Activated CD4-positive, alpha-beta T cell treated with anti-CD3 and anti-CD28 coated beads, Interleukin-2, amount 10 ng/mL, durations not matched to agents 7 days and 5 days (primary cell): ENCODE measurements at regions of chr14 and their contacts with region 1.

Region 1: DNA sequence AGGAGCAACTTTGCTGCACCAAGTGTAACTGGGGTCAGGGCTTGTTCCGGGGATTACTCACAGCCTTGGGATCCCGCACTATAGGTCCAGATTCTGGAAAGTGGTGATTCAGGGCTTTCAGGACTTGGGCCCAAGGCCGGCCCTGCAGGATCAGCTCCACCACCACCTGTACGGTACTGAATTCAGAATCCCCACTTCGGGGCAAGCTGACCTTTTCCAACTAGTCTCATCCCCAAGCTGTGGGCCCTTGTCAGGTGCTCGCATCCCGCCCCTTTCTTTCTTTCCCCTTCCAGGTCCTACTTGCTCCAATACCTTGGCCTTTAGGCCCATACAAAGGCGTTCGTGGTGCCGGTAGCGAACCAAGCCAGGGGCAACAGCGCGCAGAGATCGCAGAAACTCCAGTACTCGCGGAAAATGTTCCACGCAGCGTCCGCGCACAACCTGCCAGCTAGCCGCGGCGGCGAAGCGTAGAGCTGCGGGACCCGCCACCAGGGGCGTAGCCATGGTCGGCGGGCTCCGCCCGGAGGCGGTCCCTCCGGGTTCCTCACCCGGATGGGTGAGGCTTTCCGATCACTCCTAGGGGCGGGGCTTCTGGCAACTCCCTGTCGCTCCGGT is 487 bp downstream of the TINF2 start:
- DNase-seq: peak; percentile 96
- H3K4me3 Mint-ChIP-seq: peak overlapping the region; percentile 95
- H3K27ac Mint-ChIP-seq: peak overlapping the region; percentile 100
- H3K4me1 Mint-ChIP-seq: peaks cover 58% of the 10 kb centered on the region
- H3K27me3 Mint-ChIP-seq: no peaks in the 10 kb centered on the region

Region 2: GRCh38 chr14:24215495-24216344 is 26.2 kb before region 1 on chr14 and contains the start of gene MDP1:
- CTCF ChIA-PET with region 1: interaction called, 20 read pairs
- POLR2A ChIA-PET with region 1: interaction called, 4 read pairs
- DNase-seq: peak; percentile 92
- H3K4me3 Mint-ChIP-seq: peak within 1 kb of the TSS; percentile 92
- H3K27ac Mint-ChIP-seq: peak within 1 kb of the TSS; percentile 95
- H3K4me1 Mint-ChIP-seq: peaks cover 50% of the 10 kb centered on the region
- H3K27me3 Mint-ChIP-seq: no peaks in the 10 kb centered on the region
- total RNA-seq, gene MDP1: 10.1 to 10.7 TPM

Region 3: DNA sequence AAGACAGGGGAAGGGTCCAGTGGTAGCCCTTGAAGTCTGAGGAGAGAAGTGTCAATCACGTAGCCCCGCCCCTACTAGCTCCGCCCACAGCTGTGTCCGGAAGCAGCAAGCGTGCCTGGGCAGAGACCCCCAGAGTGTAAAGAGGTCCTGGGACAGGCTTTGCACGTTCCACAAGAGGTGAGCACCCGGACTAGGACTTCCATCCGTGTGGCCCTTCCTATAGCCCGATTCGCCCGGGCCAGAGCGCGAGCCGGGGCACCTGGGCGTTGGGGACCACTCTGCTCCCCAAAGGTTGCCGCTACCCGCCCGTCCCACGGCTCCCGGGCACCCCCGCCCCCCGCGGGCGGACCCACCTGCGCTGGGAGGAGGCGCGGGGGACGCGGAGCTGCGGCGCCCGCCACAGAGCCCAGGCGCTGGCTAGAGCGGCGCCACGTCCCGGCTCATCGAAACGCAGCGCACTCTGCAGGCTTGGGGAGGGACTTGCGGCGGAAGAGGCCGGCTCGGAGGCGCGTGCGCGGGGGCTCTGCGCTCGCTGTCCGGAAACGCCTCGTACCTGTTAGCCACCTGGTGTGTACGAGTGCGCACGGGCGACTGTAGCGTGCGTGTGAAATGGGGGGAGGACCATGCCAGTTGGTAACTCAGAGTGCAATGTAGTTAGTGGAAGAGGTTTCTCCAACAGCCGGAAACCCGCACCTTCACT is 29.3 kb after region 1 on chr14 and contains the start of gene RABGGTA:
- CTCF ChIA-PET with region 1: interaction called, 44 read pairs
- POLR2A ChIA-PET with region 1: interaction called, 11 read pairs
- DNase-seq: peak; percentile 91
- H3K4me3 Mint-ChIP-seq: peak within 1 kb of the TSS; percentile 87
- H3K27ac Mint-ChIP-seq: peak within 1 kb of the TSS; percentile 96
- H3K4me1 Mint-ChIP-seq: peaks cover 52% of the 10 kb centered on the region
- H3K27me3 Mint-ChIP-seq: no peaks in the 10 kb centered on the region
- total RNA-seq, gene RABGGTA: 54.8 to 55.0 TPM

Region 4: DNA sequence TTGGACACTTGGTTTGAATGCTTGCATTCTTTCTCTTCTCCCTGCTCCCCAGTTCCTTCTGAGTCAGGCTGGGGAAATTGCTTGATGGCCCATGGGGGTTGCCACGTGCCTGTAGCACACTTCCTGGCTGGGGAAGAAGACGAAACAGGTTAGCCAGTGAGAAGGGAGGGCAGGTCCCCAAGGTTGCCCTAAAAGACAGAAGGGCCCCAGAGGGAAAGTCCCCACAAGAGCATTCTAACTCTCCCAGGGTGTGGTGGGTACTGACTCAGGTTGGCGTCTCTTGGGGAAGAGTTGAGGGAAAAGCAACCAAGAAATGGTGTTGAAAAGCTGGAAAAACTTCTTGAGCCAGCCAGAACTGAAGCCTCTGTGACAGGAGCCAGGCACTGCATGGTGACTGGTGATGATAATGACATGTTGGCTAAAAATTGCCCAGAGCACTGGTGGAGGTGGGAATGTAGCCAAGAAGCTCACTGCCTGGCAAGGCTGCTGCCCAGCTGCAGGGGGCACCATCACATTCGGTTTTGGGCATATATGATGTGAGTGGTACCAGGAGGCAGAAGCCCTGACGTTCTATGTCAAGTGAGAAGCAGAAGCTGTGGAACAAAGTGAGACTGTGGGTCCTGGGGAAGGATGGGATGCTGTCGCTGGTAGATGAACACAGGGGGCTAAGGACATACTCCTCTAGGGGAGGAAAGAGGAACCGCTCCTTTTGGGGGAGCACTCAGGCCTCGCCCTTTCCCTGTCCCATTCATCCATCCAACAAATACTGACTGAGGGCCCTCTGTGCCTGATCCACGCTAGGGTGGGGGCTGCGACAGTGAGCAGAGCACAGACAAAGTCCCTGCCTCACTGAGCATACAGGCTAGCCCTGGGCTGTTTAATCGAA is 37.6 kb after region 1 on chr14:
- CTCF ChIA-PET with region 1: interaction called, 17 read pairs
- POLR2A ChIA-PET with region 1: no interaction called
- DNase-seq: peak; percentile 47
- H3K4me3 Mint-ChIP-seq: no peak overlapping the region
- H3K27ac Mint-ChIP-seq: peak overlapping the region; percentile 75
- H3K4me1 Mint-ChIP-seq: peaks cover 43% of the 10 kb centered on the region
- H3K27me3 Mint-ChIP-seq: peaks cover 3% of the 10 kb centered on the region

Region 5: GRCh38 chr14:24289649-24290249 is 47.8 kb after region 1 on chr14:
- CTCF ChIA-PET with region 1: interaction called, 29 read pairs
- POLR2A ChIA-PET with region 1: interaction called, 3 read pairs
- DNase-seq: peak; percentile 50
- H3K4me3 Mint-ChIP-seq: no peak overlapping the region
- H3K27ac Mint-ChIP-seq: no peak overlapping the region
- H3K4me1 Mint-ChIP-seq: peaks cover 27% of the 10 kb centered on the region
- H3K27me3 Mint-ChIP-seq: peaks cover 2% of the 10 kb centered on the region

Region 6: GRCh38 chr14:24299255-24300195 is 57.6 kb after region 1 on chr14 and contains the starts of genes DHRS1 and NOP9:
- CTCF ChIA-PET with region 1: interaction called, 75 read pairs
- POLR2A ChIA-PET with region 1: interaction called, 10 read pairs
- DNase-seq: peak; percentile 92
- H3K4me3 Mint-ChIP-seq: peak within 1 kb of the TSS; percentile 89
- H3K27ac Mint-ChIP-seq: peak within 1 kb of the TSS; percentile 93
- H3K4me1 Mint-ChIP-seq: peaks cover 53% of the 10 kb centered on the region
- H3K27me3 Mint-ChIP-seq: no peaks in the 10 kb centered on the region
- total RNA-seq, gene DHRS1: 31.7 to 35.0 TPM
- total RNA-seq, gene NOP9: 30.8 to 35.2 TPM

Region 7: DNA sequence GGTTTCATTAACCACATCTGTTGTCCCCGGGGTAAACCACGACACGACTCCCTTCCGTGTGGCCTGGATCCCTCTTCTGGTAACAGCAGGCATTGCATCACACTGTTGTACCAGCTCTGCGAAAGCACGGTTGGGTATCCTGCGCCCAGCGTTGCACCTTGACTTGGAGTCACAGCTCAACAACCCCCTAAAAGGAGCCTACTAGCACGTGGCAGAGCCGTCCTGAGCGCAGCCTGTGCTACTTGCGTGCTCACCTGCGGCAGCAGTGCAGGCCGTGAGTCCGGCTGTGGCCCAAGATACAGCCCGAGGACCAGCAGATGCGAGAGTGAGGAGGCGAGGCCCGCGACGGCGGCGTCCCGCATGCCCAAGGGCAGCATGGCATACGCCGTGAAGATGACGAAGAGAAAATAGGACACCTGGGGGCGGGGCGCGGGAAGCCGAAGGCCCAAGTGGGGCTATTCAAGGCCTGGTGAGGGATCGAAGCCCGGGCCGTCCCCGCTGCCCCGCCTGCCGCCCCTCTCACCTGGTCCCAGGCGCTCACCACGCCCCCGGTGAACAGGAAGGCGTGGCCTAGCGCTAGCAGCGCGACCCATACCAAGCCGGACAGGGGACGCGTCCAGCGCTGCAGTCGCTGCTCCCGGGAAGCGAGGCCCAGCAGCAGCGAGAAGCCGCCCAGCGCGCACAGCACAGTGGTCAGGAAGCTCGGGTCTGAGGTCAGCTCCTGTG is 90.5 kb after region 1 on chr14:
- CTCF ChIA-PET with region 1: interaction called, 15 read pairs
- POLR2A ChIA-PET with region 1: interaction called, 3 read pairs
- DNase-seq: peak; percentile 92
- H3K4me3 Mint-ChIP-seq: peak overlapping the region; percentile 30
- H3K27ac Mint-ChIP-seq: peak overlapping the region; percentile 74
- H3K4me1 Mint-ChIP-seq: peaks cover 64% of the 10 kb centered on the region
- H3K27me3 Mint-ChIP-seq: peaks cover 38% of the 10 kb centered on the region